B cell (primary cell): ENCODE measurements at regions of chr6 and their contacts with region 1.

Region 1: GRCh38 chr6:158220786-158221442 is 52.8 kb downstream of the GTF2H5 start:
- DNase-seq: peak; percentile 81
- ATAC-seq: peak; percentile 94
- H3K4me3 ChIP-seq: no peak overlapping the region
- H3K4me3 Mint-ChIP-seq: no peak overlapping the region
- H3K27ac ChIP-seq: no peak overlapping the region
- H3K27ac Mint-ChIP-seq: peak overlapping the region; percentile 65
- H3K4me1 ChIP-seq: no peaks in the 10 kb centered on the region
- H3K4me1 Mint-ChIP-seq: peaks cover 2% of the 10 kb centered on the region
- H3K27me3 ChIP-seq: no peaks in the 10 kb centered on the region
- H3K27me3 Mint-ChIP-seq: no peaks in the 10 kb centered on the region
- CTCF ChIP-seq: peak; percentile 98

Region 2: DNA sequence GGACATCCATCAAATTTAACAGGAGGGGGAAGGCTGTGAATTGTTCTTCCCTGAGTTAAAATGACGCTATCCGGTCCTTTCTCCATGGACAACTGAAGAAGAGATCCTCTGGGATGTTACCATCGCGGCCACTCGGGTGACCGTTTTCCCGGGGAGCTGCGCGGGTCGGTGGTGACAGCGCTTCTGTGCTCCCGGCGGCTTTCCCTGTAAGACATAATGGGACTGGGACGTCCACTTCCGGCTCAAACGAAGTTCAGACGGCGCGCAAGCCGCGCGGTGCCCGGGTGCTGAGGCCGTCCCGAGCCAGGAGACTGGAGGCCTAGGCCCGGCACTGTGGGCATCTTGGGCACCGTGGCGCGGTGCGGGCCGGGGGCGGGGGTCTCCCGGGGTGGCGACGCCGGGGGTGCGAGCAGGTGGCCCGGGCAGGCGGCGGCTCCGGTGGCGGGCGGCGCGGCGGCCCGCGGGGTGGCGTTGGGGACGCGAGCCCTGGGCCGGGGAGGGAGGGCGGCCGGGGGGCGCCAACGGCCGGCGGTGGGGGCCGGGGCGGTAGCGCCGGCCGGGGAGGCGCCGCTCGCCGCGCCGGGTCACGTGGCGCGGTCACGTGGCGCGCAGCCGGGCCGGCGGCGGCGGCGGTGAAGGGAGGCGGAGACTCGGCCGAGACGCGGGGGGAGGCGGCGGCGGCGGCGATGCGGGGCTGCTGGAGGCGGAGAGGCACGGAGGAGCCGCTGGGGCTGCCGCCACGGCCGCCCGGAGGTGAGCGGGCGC is 10.8 kb after region 1 on chr6:
- CTCF ChIA-PET with region 1: interaction called, 12 read pairs
- POLR2A ChIA-PET with region 1: no interaction called
- intact Hi-C with region 1: no loop called
- DNase-seq: peak; percentile 86
- ATAC-seq: peak; percentile 79
- H3K4me3 ChIP-seq: peak overlapping the region; percentile 39 to 91 (median 77)
- H3K4me3 Mint-ChIP-seq: peak overlapping the region; percentile 92
- H3K27ac ChIP-seq: peak overlapping the region; percentile 22 to 81
- H3K27ac Mint-ChIP-seq: peak overlapping the region; percentile 92
- H3K4me1 ChIP-seq: peaks cover 15 to 16% of the 10 kb centered on the region in 2 donors
- H3K4me1 Mint-ChIP-seq: peaks cover 35% of the 10 kb centered on the region
- H3K27me3 ChIP-seq: no peaks in the 10 kb centered on the region
- H3K27me3 Mint-ChIP-seq: no peaks in the 10 kb centered on the region
- CTCF ChIP-seq: no peak

Region 3: DNA sequence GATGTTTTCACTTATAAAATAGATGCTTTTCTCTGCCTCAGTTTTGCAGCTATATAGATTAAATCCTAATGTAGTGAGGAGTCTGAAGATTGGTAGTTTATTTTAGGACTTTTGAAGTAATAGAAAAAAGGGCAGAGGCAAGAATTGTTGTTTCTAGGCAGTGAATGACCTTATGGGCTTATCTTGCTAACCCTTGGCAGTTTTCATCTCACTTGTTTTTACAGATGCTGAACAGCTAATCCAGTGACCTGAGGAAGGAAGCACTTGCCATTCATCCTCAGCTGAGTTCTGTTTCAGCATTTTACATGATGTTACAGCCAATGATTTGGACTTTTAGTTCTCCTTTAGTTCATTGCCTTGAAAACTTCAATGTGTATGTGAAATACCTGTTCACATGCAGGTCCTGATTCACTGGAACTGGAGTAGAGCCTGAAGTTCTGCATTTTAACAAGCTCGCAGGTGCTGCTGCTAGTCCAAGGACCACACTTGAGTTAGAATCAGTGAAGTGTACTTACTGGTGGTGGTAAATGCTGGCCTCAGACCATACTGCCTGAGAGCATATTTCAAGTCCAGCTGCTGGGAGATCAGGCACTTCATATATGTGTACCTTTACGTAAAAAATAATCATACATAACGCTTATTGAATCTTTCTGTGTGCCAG is 178.3 kb after region 1 on chr6:
- CTCF ChIA-PET with region 1: interaction called, 15 read pairs
- POLR2A ChIA-PET with region 1: no interaction called
- intact Hi-C with region 1: no loop called
- DNase-seq: no peak
- ATAC-seq: no peak
- H3K4me3 ChIP-seq: no peak overlapping the region
- H3K4me3 Mint-ChIP-seq: no peak overlapping the region
- H3K27ac ChIP-seq: no peak overlapping the region
- H3K27ac Mint-ChIP-seq: no peak overlapping the region
- H3K4me1 ChIP-seq: no peaks in the 10 kb centered on the region
- H3K4me1 Mint-ChIP-seq: peaks cover 17% of the 10 kb centered on the region
- H3K27me3 ChIP-seq: no peaks in the 10 kb centered on the region
- H3K27me3 Mint-ChIP-seq: no peaks in the 10 kb centered on the region
- CTCF ChIP-seq: no peak

Region 4: GRCh38 chr6:158595223-158595622 is 374.3 kb after region 1 on chr6:
- CTCF ChIA-PET with region 1: interaction called, 14 read pairs
- POLR2A ChIA-PET with region 1: no interaction called
- intact Hi-C with region 1: no loop called
- DNase-seq: peak; percentile 24
- ATAC-seq: no peak
- H3K4me3 ChIP-seq: no peak overlapping the region
- H3K4me3 Mint-ChIP-seq: no peak overlapping the region
- H3K27ac ChIP-seq: no peak overlapping the region
- H3K27ac Mint-ChIP-seq: no peak overlapping the region
- H3K4me1 ChIP-seq: peaks cover 0 to 14% of the 10 kb centered on the region in 2 donors
- H3K4me1 Mint-ChIP-seq: peaks cover 14% of the 10 kb centered on the region
- H3K27me3 ChIP-seq: no peaks in the 10 kb centered on the region
- H3K27me3 Mint-ChIP-seq: no peaks in the 10 kb centered on the region
- CTCF ChIP-seq: peak; percentile 22

Region 5: GRCh38 chr6:158610319-158610968 is 389.5 kb after region 1 on chr6:
- CTCF ChIA-PET with region 1: interaction called, 86 read pairs
- POLR2A ChIA-PET with region 1: no interaction called
- intact Hi-C with region 1: no loop called
- DNase-seq: no peak
- ATAC-seq: no peak
- H3K4me3 ChIP-seq: no peak overlapping the region
- H3K4me3 Mint-ChIP-seq: no peak overlapping the region
- H3K27ac ChIP-seq: no peak overlapping the region
- H3K27ac Mint-ChIP-seq: no peak overlapping the region
- H3K4me1 ChIP-seq: no peaks in the 10 kb centered on the region
- H3K4me1 Mint-ChIP-seq: no peaks in the 10 kb centered on the region
- H3K27me3 ChIP-seq: no peaks in the 10 kb centered on the region
- H3K27me3 Mint-ChIP-seq: no peaks in the 10 kb centered on the region
- CTCF ChIP-seq: no peak